Natural killer cell (primary cell): ENCODE measurements at regions of chr19 and their contacts with region 1.

Region 1: DNA sequence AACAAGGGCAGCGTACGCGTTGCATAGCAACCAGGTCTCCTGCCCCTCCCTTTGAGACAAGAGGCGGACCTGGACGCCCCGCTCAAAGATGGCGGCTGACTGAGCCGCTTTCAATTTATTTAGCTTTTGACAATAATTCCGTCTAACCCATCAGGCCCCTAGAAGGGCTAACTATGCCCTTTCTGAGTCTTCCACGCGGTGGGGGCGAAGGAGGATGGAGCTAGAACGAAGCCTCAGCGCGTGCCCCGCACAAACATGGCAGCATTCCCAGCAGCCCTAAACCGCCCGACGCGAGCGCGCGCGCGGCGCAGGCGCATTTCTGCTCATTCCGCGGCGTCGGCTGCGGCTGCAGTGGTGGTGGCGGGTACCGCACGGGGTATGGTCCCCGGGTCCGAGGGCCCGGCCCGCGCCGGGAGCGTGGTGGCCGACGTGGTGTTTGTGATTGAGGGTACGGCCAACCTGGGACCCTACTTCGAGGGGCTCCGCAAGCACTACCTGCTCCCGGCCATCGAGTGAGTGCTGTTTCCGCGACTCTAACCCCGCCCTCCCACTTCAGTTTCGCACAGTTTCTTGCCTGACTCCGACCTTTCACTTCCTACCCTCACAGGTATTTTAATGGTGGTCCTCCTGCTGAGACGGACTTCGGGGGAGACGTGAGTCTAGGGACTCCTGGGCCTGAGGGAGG is at the start of gene MED25:
- DNase-seq: peak; percentile 91 to 95
- ATAC-seq: peak; percentile 52 to 74 (median 62)
- H3K4me3 ChIP-seq: peak within 1 kb of the TSS; percentile 98
- H3K4me3 Mint-ChIP-seq: peak within 1 kb of the TSS; percentile 98
- H3K27ac ChIP-seq: peak within 1 kb of the TSS; percentile 99
- H3K27ac Mint-ChIP-seq: peak within 1 kb of the TSS; percentile 98
- H3K4me1 ChIP-seq: peaks cover 24% of the 10 kb centered on the region
- H3K4me1 Mint-ChIP-seq: peaks cover 21 to 38% of the 10 kb centered on the region in 2 donors
- H3K27me3 ChIP-seq: no peaks in the 10 kb centered on the region
- H3K27me3 Mint-ChIP-seq: no peaks in the 10 kb centered on the region
- CTCF ChIP-seq: peak; percentile 14
- total RNA-seq, gene MED25: 64.2 to 132 (median 69.5) TPM

Region 2: DNA sequence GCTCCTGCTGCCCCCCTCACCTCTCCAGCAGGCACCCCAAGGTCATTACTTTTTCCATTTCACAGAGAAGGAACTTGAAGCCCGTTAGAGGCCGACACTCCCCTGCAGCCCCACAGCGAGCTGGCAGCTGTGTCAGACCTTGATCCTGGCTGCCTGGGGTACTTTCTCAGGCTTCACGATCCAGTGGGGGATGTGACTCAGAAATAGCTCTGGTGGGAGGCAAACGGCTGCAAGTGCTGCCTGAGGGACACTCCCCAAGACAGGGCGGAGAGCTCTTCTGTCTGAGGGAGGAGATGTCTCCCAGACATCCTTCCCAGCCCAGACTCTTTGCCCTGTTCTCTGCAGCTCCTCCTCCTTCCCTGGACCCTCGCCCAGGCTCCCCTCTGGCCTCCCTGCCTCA is 59.8 kb before region 1 on chr19:
- intact Hi-C with region 1: no loop called
- DNase-seq: no peak
- ATAC-seq: no peak
- H3K4me3 ChIP-seq: no peak overlapping the region
- H3K4me3 Mint-ChIP-seq: no peak overlapping the region
- H3K27ac ChIP-seq: no peak overlapping the region
- H3K27ac Mint-ChIP-seq: no peak overlapping the region
- H3K4me1 ChIP-seq: peaks cover 12% of the 10 kb centered on the region
- H3K4me1 Mint-ChIP-seq: peaks cover 0 to 5% of the 10 kb centered on the region in 2 donors
- H3K27me3 ChIP-seq: no peaks in the 10 kb centered on the region
- H3K27me3 Mint-ChIP-seq: no peaks in the 10 kb centered on the region
- CTCF ChIP-seq: no peak

Region 3: GRCh38 chr19:49832556-49832955 is 14.4 kb after region 1 on chr19:
- intact Hi-C with region 1: no loop called
- DNase-seq: no peak
- ATAC-seq: no peak
- H3K4me3 ChIP-seq: no peak overlapping the region
- H3K4me3 Mint-ChIP-seq: no peak overlapping the region
- H3K27ac ChIP-seq: no peak overlapping the region
- H3K27ac Mint-ChIP-seq: no peak overlapping the region
- H3K4me1 ChIP-seq: no peaks in the 10 kb centered on the region
- H3K4me1 Mint-ChIP-seq: peaks cover 5 to 10% of the 10 kb centered on the region in 2 donors
- H3K27me3 ChIP-seq: no peaks in the 10 kb centered on the region
- H3K27me3 Mint-ChIP-seq: no peaks in the 10 kb centered on the region
- CTCF ChIP-seq: no peak

Region 4: GRCh38 chr19:49850473-49851342 is 32.6 kb after region 1 on chr19 and contains the start of gene PTOV1:
- intact Hi-C with region 1: loop called (anchors 2 kb)
- DNase-seq: peak; percentile 92 to 95
- ATAC-seq: peak; percentile 90 to 96 (median 91)
- H3K4me3 ChIP-seq: peak within 1 kb of the TSS; percentile 77
- H3K4me3 Mint-ChIP-seq: peak within 1 kb of the TSS; percentile 93
- H3K27ac ChIP-seq: peak within 1 kb of the TSS; percentile 94
- H3K27ac Mint-ChIP-seq: peak within 1 kb of the TSS; percentile 86 to 95
- H3K4me1 ChIP-seq: peaks cover 31% of the 10 kb centered on the region
- H3K4me1 Mint-ChIP-seq: peaks cover 30 to 33% of the 10 kb centered on the region in 2 donors
- H3K27me3 ChIP-seq: no peaks in the 10 kb centered on the region
- H3K27me3 Mint-ChIP-seq: no peaks in the 10 kb centered on the region
- CTCF ChIP-seq: no peak
- total RNA-seq, gene PTOV1: 116 to 132 (median 128) TPM

Region 5: DNA sequence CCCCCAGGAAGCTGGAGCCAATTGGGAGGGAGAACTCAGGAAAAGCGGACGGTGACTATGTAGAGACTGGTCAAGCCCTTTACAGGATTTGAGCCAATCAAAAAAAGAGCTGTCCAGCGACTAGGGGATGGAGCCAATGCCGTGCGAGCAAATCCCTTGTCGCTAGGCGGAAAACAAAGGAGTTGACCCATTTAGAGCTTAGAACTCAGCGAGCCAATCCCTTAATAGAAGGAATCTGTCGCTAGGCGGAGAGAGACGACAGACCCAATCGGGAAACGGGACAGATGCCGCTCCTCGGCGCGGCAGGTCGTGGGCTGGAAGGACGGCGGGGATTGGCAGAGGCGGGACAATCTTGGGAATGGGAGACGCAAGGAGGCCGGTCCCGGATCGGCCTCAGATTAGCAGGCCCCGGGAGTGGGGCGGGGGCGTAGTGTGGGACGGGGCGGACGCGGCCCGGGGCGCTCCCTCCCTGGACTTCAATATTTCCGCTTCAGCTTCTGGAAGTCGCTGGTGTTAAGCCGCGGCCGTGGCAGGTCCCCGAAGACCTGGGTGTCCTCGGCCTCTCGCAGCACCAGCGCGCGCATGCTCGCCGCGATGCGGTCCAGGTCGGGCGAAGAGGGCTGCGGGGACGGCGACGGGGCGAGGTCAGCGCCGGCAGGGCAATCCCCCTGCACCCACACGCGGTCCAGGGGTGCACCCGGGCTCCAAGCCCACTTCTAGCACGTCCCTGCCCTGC is 51.5 kb after region 1 on chr19:
- intact Hi-C with region 1: loop called (anchors 1 kb)
- DNase-seq: peak; percentile 90 to 96
- ATAC-seq: peak; percentile 76 to 90 (median 81)
- H3K4me3 ChIP-seq: peak overlapping the region; percentile 68
- H3K4me3 Mint-ChIP-seq: no peak overlapping the region
- H3K27ac ChIP-seq: peak overlapping the region; percentile 88
- H3K27ac Mint-ChIP-seq: no peak overlapping the region
- H3K4me1 ChIP-seq: peaks cover 51% of the 10 kb centered on the region
- H3K4me1 Mint-ChIP-seq: peaks cover 18 to 20% of the 10 kb centered on the region in 2 donors
- H3K27me3 ChIP-seq: no peaks in the 10 kb centered on the region
- H3K27me3 Mint-ChIP-seq: no peaks in the 10 kb centered on the region
- CTCF ChIP-seq: no peak

Region 6: GRCh38 chr19:49889687-49890348 is 71.7 kb after region 1 on chr19:
- intact Hi-C with region 1: loop called (anchors 1 kb)
- DNase-seq: peak; percentile 75 to 90
- ATAC-seq: peak; percentile 81 to 88 (median 86)
- H3K4me3 ChIP-seq: peak overlapping the region; percentile 47
- H3K4me3 Mint-ChIP-seq: peak overlapping the region; percentile 84
- H3K27ac ChIP-seq: no peak overlapping the region
- H3K27ac Mint-ChIP-seq: peak overlapping the region in 1 of 2 donors; percentile 40
- H3K4me1 ChIP-seq: peaks cover 16% of the 10 kb centered on the region
- H3K4me1 Mint-ChIP-seq: peaks cover 0 to 8% of the 10 kb centered on the region in 2 donors
- H3K27me3 ChIP-seq: no peaks in the 10 kb centered on the region
- H3K27me3 Mint-ChIP-seq: no peaks in the 10 kb centered on the region
- CTCF ChIP-seq: peak; percentile 84